Dendritic cell treated with granulocyte-macrophage colony-stimulating factor and Interleukin-4, amounts not matched to agents 40 ng/mL and 50 ng/mL, for 4 days (primary cell): ENCODE measurements at regions of chr11 and their contacts with region 1.

Region 1: GRCh38 chr11:12893787-12894672 is 115.1 kb upstream of the RASSF10 start:
- H3K4me3 Mint-ChIP-seq: no peak overlapping the region
- H3K27ac Mint-ChIP-seq: no peak overlapping the region
- H3K4me1 Mint-ChIP-seq: peaks cover 5% of the 10 kb centered on the region
- H3K27me3 Mint-ChIP-seq: peaks cover 8% of the 10 kb centered on the region

Region 2: DNA sequence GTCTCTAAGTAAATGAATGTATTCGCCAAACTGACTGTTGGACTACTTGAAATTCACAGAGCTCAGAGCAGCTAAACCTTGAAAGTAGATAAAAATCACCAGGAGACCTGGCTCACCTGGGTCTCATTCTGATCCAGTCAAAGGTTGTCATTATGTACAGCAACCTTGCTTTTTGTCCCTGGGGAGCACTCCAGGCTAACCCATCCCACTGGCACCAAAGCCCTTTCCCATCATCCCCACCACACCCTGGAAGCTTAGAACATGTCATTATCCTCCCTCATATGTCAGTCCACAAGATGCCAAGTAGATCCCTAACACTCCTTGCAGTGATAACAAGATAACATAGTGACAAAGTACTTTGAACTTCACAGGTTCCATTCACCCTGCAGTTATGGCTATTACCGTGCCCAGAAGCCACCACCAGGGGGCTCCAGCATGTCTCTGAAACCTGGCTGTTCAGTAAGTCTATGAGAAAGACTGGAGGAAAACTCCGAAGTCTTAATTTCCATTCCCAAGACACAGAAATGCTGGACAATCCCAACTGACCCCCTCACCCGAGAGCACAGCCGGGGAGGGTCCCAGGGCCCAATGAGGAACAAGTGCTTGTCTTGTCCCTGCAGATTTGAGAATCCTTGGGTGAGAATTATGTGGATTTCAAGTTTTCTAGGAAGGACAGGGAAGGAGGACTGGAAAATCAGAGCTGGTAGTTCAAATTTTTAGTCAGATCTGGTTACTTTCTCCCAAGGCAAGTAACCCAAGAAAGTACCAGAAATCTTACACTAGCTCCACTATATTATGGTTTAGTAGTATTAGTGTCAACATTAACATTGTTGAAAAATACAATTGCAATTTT is 1095.2 kb before region 1 on chr11:
- intact Hi-C with region 1: loop called (anchors 10 kb)
- H3K4me3 Mint-ChIP-seq: no peak overlapping the region
- H3K27ac Mint-ChIP-seq: no peak overlapping the region
- H3K4me1 Mint-ChIP-seq: no peaks in the 10 kb centered on the region
- H3K27me3 Mint-ChIP-seq: peaks cover 28% of the 10 kb centered on the region

Region 3: GRCh38 chr11:12288212-12288930 is 605.7 kb before region 1 on chr11:
- intact Hi-C with region 1: loop called (anchors 5 kb)
- H3K4me3 Mint-ChIP-seq: no peak overlapping the region
- H3K27ac Mint-ChIP-seq: no peak overlapping the region
- H3K4me1 Mint-ChIP-seq: peaks cover 22% of the 10 kb centered on the region
- H3K27me3 Mint-ChIP-seq: no peaks in the 10 kb centered on the region

Region 4: DNA sequence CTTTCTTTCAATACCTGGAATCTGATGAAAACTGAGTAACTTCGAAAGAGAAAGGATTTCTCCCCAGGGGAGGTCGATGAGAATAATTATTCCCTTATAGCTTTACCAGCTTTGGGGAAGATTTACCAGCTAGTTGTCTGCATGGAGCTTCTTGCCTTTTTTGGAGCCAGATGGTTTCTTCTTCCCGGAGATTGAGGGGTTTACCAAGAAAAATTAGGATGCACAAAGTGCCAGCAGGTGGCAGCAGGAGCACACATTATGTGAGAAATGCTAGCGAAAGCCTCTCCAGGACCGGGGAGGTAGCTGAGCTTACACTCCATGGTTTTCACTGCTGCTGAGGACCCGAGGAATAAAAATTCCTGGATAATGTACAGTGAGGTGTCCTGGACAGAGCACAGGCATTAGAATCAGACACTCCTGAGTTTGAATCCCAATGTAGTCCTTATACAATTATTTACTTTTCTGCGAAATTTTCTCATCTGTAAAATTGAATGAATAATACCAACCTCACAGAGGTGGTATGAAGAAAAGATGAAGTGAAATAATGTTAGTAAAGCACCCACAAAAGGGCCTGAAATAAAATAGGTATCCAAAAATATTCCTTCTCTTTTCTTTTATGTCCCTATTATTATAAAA is 562.7 kb before region 1 on chr11:
- intact Hi-C with region 1: loop called (anchors 2 kb)
- H3K4me3 Mint-ChIP-seq: no peak overlapping the region
- H3K27ac Mint-ChIP-seq: no peak overlapping the region
- H3K4me1 Mint-ChIP-seq: no peaks in the 10 kb centered on the region
- H3K27me3 Mint-ChIP-seq: peaks cover 3% of the 10 kb centered on the region

Region 5: GRCh38 chr11:12411806-12412727 is 482.0 kb before region 1 on chr11:
- intact Hi-C with region 1: loop called (anchors 2 kb)
- H3K4me3 Mint-ChIP-seq: no peak overlapping the region
- H3K27ac Mint-ChIP-seq: no peak overlapping the region
- H3K4me1 Mint-ChIP-seq: no peaks in the 10 kb centered on the region
- H3K27me3 Mint-ChIP-seq: peaks cover 13% of the 10 kb centered on the region

Region 6: GRCh38 chr11:12599408-12600143 is 294.5 kb before region 1 on chr11:
- intact Hi-C with region 1: loop called (anchors 1 kb)
- H3K4me3 Mint-ChIP-seq: no peak overlapping the region
- H3K27ac Mint-ChIP-seq: no peak overlapping the region
- H3K4me1 Mint-ChIP-seq: no peaks in the 10 kb centered on the region
- H3K27me3 Mint-ChIP-seq: peaks cover 11% of the 10 kb centered on the region